Motor neuron (in vitro differentiated cells): ENCODE measurements at regions of chr1 and their contacts with region 1.

Region 1: DNA sequence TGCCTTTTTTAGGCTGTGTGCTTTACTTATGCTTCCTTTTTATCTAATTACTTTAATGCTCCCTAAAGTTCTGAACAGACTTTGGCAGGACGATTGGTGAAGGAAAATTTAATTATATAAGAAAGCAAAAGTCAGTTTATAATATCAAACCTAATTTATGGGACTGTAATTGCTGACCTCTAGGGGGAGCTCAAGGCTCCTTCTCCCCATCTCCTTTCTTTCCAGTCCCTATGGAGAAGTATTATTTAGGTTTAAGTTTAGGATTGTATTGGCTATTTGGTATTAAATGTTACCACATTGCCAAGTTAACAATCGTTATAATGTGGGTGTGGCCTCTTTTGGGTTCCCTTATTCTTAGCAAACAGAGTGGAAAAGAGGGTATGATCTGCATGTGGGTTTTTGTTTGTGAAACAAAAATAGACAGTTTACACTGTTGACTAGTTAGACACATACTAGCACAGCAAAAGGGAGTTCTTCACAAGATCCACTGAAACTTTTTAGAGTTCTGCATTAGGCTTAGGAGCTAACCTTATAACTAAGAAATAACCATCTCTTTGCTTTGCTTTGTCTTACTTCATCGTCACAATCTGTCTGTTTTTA is 48.2 kb upstream of the TNFSF4 start:
- ATAC-seq: peak in 3 of 8 experiments; percentile 53 to 61 (median 57)
- H3K4me3 ChIP-seq: no peak overlapping the region
- H3K27ac ChIP-seq: no peak overlapping the region
- H3K4me1 ChIP-seq: no peaks in the 10 kb centered on the region

Region 2: GRCh38 chr1:173420330-173420806 is 165.1 kb after region 1 on chr1:
- in situ Hi-C with region 1: loop called in 1 of 9 experiments (anchors 25 kb)
- ATAC-seq: peak; percentile 21 to 99 (median 57)
- H3K4me3 ChIP-seq: no peak overlapping the region
- H3K27ac ChIP-seq: no peak overlapping the region
- H3K4me1 ChIP-seq: no peaks in the 10 kb centered on the region

Region 3: DNA sequence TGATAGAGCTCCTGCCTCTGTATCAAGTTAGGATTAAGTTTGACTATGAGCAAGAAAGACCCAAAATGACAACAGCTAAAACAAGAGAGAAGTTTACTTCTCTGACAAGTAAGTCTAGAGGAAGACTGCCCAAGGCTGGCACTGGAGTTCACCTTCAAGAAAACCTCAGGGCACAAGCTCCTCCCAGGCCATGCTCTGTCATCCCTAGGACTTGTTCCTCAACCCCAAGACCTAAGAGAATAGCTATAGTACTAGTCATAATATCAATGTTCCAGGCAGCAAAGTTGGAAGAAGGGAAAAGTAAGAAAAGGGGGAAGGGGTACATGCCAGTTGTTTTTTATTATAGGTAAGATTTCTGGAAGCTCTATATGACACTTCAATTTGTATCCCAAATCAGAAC is 542.8 kb after region 1 on chr1:
- in situ Hi-C with region 1: loop called in 1 of 9 experiments (anchors 25 kb)
- ATAC-seq: no peak
- H3K4me3 ChIP-seq: no peak overlapping the region
- H3K27ac ChIP-seq: no peak overlapping the region
- H3K4me1 ChIP-seq: no peaks in the 10 kb centered on the region